ENCODE measurements at regions of chr4 and their contacts with region 1.

Region 1: DNA sequence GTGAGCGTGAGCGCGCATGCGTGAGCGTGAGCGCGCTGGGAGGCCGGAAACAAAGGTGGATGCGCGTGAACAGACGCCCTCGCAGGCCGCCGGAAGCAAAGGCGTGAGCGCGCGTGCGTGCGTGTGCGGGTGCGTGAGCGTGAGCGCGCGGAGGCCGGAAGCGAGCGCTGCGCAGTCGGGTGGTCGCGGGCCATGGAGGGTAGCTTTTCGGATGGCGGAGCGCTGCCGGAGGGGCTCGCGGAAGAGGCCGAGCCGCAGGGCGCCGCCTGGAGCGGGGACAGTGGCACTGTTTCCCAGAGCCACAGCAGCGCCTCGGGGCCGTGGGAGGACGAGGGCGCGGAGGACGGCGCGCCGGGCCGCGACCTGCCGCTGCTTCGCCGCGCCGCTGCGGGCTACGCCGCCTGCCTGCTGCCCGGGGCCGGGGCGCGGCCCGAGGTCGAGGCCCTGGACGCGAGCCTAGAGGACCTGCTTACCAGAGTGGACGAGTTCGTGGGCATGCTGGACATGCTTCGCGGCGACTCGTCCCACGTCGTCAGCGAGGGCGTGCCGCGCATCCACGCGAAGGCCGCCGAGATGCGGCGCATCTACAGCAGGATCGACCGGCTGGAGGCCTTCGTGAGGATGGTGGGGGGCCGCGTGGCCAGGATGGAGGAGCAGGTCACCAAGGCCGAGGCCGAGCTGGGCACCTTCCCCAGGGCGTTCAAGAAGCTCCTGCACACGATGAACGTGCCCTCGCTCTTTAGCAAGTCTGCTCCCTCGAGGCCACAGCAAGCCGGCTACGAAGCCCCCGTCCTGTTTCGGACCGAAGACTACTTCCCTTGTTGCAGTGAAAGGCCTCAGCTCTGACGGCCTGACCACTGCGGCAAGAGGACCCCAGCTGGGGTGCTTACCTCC is at the start of gene BLOC1S4:
- DNase-seq: peak; percentile 94
- H3K4me3 ChIP-seq: peak within 1 kb of the TSS; percentile 19 to 69 (median 63)
- H3K27ac ChIP-seq: peak within 1 kb of the TSS; percentile 14
- H3K4me1 ChIP-seq: peaks cover 10% of the 10 kb centered on the region
- H3K27me3 ChIP-seq: peaks cover 2 to 4% of the 10 kb centered on the region in 2 experiments
- CTCF ChIP-seq: peak in 1 of 2 donors; percentile 41
- POLR2A ChIP-seq: peak; percentile 92
- total RNA-seq, gene BLOC1S4: 12.7 and 13.1 TPM in 2 replicates

Region 2: DNA sequence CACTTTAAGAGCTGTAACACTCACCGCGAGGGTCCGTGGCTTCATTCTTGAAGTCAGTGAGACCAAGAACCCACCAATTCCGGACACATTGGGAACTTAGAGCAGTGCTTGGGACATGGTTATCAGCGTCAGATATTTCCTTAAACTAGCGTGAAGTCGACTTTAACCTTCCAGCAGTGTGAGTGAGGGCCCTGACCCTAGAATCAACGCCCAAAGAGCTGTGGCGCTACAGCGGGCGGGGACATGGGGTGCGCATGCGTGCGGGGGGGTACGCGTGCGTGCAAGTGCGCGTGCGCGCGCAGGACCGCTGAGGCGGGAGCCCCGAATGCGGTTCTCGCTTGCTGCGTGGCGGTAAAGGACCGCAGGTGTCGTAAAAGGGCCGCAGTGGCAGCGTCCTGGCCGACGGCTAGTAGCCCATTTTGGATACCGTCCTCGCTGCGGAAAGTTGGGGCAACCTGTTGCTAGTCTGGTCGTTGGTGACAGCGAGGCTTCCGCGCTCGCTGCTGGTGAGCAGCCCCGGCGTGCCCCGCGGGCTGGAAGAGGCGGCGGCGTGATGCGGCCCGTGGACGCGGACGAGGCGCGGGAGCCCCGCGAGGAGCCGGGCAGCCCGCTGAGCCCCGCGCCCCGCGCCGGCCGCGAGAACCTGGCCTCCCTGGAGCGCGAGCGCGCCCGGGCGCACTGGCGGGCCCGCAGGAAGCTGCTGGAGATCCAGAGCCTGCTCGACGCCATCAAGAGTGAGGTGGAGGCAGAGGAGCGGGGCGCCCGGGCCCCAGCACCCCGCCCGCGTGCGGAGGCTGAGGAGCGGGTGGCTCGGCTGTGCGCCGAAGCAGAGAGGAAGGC is 42.4 kb before region 1 on chr4:
- CTCF ChIA-PET with region 1: interaction called, 6 read pairs
- POLR2A ChIA-PET with region 1: interaction called, 4 read pairs
- dilution Hi-C with region 1: no loop called
- intact Hi-C with region 1: loop called (anchors 2 kb)
- DNase-seq: peak; percentile 97
- H3K4me3 ChIP-seq: peak overlapping the region; percentile 25 to 71 (median 49)
- H3K27ac ChIP-seq: no peak overlapping the region
- H3K4me1 ChIP-seq: peaks cover 10% of the 10 kb centered on the region
- H3K27me3 ChIP-seq: no peaks in the 10 kb centered on the region
- CTCF ChIP-seq: no peak
- POLR2A ChIP-seq: peak; percentile 77

Region 3: GRCh38 chr4:6783053-6783981 is 67.1 kb after region 1 on chr4:
- CTCF ChIA-PET with region 1: interaction called, 3 read pairs
- POLR2A ChIA-PET with region 1: no interaction called
- dilution Hi-C with region 1: no loop called
- intact Hi-C with region 1: loop called (anchors 1 kb)
- DNase-seq: peak; percentile 84
- H3K4me3 ChIP-seq: peak overlapping the region; percentile 75 to 99 (median 83)
- H3K27ac ChIP-seq: peak overlapping the region; percentile 89
- H3K4me1 ChIP-seq: peaks cover 10% of the 10 kb centered on the region
- H3K27me3 ChIP-seq: no peaks in the 10 kb centered on the region
- CTCF ChIP-seq: no peak
- POLR2A ChIP-seq: no peak

Region 4: DNA sequence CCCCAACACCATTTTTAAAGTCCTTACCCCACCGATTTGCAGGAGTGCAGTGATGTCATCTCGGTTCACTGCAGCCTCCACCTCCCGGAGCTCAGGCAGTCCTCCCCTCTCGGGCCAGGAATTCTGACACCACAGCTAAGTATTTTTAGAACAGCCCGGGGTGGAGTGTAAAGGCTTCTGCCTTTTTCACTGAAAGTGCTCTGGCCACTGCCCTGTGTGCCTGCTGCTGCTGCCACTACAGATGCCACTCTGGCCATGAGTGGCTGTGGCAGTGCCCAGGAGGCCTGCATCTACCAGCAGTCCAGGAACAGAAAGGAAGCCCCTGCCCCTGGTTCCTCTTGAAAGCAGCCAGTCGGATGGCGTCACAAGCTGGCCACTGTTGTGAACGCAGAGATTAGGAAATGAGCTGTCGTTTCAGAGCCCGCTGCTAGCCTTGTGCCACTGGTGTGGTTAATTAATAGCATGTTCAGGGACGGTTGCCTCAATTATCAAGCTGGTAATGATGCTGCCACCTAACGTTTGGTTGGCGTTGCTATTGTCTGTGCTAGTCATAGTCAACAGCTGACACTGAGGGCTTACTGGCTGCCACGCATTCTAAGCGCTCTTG is 169.8 kb after region 1 on chr4:
- CTCF ChIA-PET with region 1: interaction called, 59 read pairs
- POLR2A ChIA-PET with region 1: no interaction called
- dilution Hi-C with region 1: no loop called
- intact Hi-C with region 1: no loop called
- DNase-seq: peak; percentile 15
- H3K4me3 ChIP-seq: no peak overlapping the region
- H3K27ac ChIP-seq: no peak overlapping the region
- H3K4me1 ChIP-seq: no peaks in the 10 kb centered on the region
- H3K27me3 ChIP-seq: no peaks in the 10 kb centered on the region
- CTCF ChIP-seq: no peak
- POLR2A ChIP-seq: no peak

Region 5: DNA sequence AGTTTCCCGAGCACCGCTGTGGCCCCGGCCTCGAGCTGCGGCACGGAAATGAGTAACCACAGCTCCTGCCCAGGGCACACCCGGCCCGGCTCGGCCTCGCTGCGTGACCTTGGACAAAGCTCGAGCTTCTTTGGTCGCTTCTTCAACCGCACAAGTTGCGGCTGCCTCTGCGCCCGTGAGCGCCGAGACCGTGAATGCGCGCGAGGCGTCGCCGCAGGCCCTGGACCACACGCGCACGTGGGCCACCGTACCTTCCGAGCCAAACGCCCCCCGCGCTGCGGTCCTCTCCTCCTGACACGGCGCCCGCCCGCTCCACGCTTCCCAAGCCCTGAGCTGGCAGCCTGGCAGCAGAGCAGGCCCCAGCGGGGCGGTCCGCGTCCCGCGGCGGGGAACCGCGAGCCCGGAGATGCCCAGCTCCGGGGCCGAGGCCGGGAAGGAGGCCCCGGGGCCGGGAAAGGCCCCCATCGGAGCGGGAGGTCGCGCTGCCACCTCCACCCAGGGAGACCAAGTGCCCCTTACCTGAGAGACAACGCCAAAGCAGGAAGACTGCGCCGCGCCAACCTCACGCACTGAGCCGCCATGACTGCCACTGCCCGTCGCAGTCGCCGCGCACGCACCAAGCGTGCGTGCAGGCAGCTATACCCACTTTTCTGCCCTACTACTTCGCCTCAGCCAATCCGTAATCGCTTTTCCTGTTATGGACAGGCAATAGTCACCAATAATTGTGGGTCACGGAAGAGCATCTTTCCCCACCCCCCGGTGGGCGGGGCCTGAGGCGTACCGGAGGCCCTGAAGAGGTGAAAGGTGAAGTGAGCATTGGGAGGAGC is 351.4 kb after region 1 on chr4 and contains the start of gene GRPEL1:
- CTCF ChIA-PET with region 1: interaction called, 30 read pairs
- POLR2A ChIA-PET with region 1: no interaction called
- dilution Hi-C with region 1: no loop called
- intact Hi-C with region 1: loop called (anchors 1 kb)
- DNase-seq: peak; percentile 100
- H3K4me3 ChIP-seq: peak within 1 kb of the TSS; percentile 62 to 99 (median 71)
- H3K27ac ChIP-seq: peak within 1 kb of the TSS; percentile 57
- H3K4me1 ChIP-seq: peaks cover 20% of the 10 kb centered on the region
- H3K27me3 ChIP-seq: peaks cover 0 to 3% of the 10 kb centered on the region in 2 experiments
- CTCF ChIP-seq: no peak
- POLR2A ChIP-seq: peak; percentile 94
- total RNA-seq, gene GRPEL1: 42.6 and 47.3 TPM in 2 replicates